ENCODE measurements at regions of chr18 and their contacts with region 1.

Region 1: GRCh38 chr18:50967714-50968661 is at the start of gene ELAC1:
- DNase-seq: peak; percentile 57 to 61
- H3K4me3 ChIP-seq: peak within 1 kb of the TSS; percentile 94
- H3K27ac ChIP-seq: peak within 1 kb of the TSS; percentile 62
- H3K4me1 ChIP-seq: peaks cover 22% of the 10 kb centered on the region
- H3K27me3 ChIP-seq: no peaks in the 10 kb centered on the region
- CTCF ChIP-seq: no peak
- total RNA-seq, gene ELAC1: 5.2 and 6.0 TPM in 2 replicates

Region 2: GRCh38 chr18:50981381-50981780 is 13.4 kb after region 1 on chr18:
- CTCF ChIA-PET with region 1: no interaction called
- POLR2A ChIA-PET with region 1: interaction called, 41 read pairs
- intact Hi-C with region 1: no loop called
- DNase-seq: peak; percentile 3 to 87
- H3K4me3 ChIP-seq: no peak overlapping the region
- H3K27ac ChIP-seq: peak overlapping the region; percentile 63
- H3K4me1 ChIP-seq: peaks cover 14% of the 10 kb centered on the region; the same call in 1 of the 2 replicates
- H3K27me3 ChIP-seq: no peaks in the 10 kb centered on the region
- CTCF ChIP-seq: no peak

Measured in PC-9 (cell line).